AG04449 (cell line): ENCODE measurements at regions of chr9 and their contacts with region 1.

Region 1: DNA sequence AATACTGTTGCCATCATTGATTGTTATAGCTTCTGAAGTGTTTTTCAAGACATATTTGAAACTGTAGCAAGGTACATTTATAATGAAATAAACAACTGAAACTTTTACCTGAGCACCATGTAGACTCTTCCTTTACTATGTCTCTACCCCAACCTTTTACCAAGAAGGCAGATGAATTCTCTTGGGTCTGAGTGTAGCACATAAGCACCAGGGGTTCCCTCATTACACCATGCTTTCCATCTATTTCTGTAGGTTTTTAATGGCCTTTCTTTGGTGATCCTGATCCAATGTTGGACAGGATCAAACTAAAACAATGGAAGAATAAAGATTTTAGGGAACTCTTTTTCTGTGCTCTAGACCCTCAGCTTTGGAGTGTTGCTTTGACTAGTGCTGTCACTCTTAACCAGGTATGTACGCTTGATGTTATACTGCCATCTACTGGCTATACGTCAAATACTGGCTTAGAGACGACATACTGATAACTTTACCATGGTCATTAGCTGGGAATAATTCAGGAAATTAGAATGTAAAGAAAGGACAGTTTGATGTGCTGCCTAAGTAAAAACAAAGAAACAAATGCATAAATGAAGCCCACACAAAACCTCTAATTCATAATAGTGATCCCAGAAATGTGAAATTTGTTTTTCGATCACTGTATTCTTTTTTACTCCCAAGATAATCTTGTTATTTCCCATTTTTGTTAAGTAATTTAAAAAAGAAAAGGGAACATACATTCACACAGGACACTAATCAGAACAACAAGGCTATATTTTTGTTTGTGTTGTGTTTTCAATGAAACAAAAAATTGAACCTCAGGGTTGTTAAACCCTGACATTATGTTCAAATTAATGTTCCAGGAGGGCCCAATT is 30.7 kb downstream of the IFNW1 start:
- DNase-seq: peak; percentile 37
- H3K4me3 ChIP-seq: no peak overlapping the region
- CTCF ChIP-seq: peak; percentile 73

Region 2: DNA sequence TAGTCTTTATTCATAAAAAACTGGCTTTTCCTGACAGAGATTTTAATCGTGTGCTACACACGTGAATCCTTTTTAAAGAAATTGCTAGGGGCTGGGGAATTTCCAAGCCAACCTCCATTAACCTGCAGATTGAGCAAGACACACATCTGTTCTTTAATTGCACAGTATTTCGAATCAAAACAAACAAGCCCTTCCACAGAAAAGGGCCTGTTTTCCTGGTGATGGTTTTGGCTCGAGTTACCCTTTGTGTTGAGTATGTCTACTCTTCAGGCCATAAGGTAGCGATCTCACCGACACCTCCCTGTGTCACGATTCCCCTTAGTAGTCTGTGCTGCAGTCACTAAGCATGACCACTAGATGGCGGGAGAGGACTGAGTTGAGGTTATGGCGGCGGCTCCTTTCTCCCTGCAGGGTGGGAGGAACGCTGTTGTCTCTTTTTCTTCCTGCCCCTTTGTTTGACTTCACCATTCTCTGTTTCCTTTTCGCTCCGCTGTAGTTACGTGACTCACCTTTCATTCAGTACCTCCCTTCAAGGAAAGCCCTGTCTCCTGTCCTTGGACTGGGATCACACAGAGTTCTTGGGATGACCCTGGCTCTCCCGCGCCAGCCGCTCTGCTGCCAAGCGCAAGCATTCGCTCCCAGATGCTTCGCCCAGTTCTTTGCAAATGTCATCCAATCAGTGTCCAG is 1185.0 kb before region 1 on chr9:
- CTCF ChIA-PET with region 1: interaction called, 17 read pairs
- POLR2A ChIA-PET with region 1: no interaction called
- DNase-seq: peak; percentile 4
- H3K4me3 ChIP-seq: peak overlapping the region; percentile 61
- CTCF ChIP-seq: peak; percentile 98

Region 3: DNA sequence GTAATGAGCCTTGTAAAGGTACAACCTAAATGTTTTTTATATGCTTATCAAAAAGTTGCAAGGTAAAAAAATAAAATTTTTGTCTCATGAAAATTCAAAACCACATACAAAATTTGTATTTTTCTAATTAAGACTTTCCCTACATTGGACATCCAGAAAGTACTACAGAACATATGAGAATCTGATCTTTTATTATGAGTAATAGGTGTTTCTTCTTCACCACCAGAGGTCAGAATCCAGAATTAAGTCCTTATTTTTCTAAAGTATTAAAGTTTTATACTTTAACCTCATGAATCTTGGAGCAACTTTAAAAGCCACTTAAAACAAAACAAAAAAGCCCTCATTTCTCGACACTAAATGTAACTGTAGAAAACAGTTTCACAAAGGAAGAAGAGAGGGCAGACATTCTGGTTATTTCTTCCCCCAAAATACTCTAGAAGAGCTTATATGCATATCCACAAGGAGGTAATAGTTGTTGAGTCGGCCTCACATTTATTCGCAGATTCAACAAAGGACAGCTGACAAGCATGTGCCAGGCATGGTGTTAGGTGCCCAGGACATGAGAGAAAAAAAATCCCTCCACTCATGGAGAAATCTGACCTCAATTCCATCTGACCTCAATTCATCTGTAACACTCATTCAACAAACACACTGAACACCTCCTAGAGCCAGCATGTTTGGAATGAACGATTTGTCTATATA is 557.9 kb before region 1 on chr9:
- CTCF ChIA-PET with region 1: interaction called, 11 read pairs
- POLR2A ChIA-PET with region 1: no interaction called
- DNase-seq: no peak
- H3K4me3 ChIP-seq: no peak overlapping the region
- CTCF ChIP-seq: no peak

Region 4: DNA sequence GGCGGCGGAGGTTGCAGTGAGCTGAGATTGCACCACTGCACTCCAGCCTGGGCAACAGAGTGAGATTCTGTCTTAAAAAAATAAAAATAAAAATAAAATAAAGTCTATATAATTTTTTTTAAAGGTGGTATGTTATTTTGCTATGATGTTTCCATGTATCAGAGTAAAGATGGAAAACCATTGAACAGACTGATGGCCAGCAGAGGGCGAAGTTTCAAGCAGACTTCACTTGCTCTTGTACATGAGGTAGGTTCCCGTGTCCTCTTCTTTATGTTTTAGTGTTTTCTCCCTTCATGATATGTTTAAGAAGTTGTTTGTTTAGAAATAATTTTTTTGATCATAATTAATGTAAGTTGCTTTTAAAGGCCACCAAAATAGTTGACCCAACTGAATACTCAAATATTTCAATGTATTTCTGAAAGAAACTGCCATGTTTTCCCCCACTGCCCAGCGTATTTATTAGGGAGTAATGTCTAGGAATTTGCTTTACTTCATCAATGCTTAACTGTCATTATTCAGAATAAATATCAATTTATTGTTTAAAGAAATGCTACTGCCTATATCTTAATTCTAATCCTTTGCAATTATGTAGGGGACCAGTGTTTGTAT is 225.9 kb before region 1 on chr9:
- CTCF ChIA-PET with region 1: interaction called, 69 read pairs
- POLR2A ChIA-PET with region 1: no interaction called
- DNase-seq: no peak
- H3K4me3 ChIP-seq: no peak overlapping the region
- CTCF ChIP-seq: peak; percentile 61

Region 5: DNA sequence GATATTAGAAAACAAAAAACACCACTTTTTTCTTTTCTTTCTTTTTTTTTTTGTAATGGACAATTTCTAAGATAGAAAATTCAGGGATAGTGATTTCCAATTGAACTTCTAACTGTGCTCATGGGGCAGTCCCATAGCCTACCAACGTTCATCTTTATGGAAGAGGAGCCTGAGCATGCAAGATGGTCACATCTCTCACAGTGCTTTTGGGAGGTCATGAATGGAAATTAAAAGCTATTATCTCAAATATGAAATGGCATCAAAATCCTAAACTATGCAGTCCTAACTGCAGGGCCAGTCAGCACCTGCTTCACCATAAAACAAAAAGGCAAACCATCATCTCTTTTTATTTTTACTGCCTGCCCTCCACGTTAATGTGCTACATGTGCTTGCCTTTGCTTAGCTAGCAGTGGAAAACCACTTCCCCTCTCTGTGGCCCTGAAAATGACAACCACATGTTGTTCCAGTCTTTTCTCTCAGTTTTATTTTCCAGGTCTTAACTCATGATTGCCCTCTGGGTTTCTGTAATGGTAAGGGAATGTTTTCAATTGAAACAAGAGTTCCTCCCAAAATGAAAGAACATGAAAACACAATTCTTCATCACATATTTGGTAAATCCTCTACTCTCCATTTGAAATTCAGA is 49.9 kb before region 1 on chr9:
- CTCF ChIA-PET with region 1: no interaction called
- POLR2A ChIA-PET with region 1: no interaction called
- DNase-seq: no peak
- H3K4me3 ChIP-seq: no peak overlapping the region
- CTCF ChIP-seq: no peak

Region 6: DNA sequence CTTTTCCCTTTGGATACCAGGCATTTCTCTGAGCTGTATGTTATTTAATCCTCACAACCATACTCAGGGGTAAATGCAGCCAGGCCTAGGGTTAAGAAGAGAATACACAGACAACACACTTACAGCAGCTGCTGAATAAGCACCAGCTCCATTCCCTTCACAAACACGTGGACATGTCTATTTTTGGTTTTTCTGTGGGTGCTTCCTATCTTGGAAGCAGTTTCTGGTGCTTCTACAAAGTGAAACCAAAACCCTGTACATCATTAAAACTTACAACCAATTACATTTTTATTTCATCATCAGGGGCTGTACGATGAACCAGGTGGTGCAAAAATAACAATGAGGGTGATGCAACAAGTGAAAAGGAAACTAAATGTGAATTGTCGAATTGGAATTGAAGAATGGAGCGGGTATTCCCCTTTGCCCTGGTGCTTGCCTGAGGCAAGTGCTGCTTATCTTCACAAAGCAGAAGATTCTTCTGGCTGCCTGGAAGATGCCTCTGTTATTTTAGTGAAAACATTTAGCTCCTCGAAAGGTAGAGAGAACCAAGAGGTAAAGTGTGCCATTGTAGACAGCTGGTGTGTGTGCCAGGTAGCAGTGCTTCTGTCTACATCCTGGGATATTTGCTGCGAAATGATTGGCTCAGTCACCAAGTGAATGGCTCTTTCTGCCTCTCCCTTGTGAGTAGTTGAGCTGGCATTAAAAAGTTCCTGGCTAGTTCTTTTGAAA is 14.6 kb before region 1 on chr9:
- CTCF ChIA-PET with region 1: interaction called, 28 read pairs
- POLR2A ChIA-PET with region 1: no interaction called
- DNase-seq: peak; percentile 19
- H3K4me3 ChIP-seq: no peak overlapping the region
- CTCF ChIP-seq: no peak